ENCODE measurements at regions of chr10 and their contacts with region 1.

Region 1: DNA sequence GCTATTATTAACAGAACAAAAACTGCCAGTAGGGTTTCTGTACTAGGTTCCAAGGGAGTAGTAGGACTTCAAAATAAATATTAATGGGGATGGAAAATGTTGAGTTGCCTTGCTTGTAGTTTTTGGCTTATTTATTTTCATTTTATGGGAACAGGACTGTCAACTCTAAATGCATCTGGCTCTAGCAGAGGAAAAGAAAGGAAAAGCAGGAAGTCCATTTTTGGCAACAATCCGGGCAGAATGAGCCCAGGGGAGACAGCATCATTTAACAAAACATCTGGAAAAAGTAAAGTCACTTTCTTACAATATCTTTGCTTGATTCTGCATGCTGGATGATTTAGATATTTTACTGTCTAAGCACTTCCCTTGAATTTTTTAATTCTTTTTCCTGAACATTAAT is 69.4 kb downstream of the NOC3L start:
- DNase-seq: no peak
- H3K4me3 ChIP-seq: no peak overlapping the region
- H3K27ac ChIP-seq: no peak overlapping the region
- H3K4me1 ChIP-seq: no peaks in the 10 kb centered on the region
- H3K27me3 ChIP-seq: no peaks in the 10 kb centered on the region
- CTCF ChIP-seq: no peak

Region 2: DNA sequence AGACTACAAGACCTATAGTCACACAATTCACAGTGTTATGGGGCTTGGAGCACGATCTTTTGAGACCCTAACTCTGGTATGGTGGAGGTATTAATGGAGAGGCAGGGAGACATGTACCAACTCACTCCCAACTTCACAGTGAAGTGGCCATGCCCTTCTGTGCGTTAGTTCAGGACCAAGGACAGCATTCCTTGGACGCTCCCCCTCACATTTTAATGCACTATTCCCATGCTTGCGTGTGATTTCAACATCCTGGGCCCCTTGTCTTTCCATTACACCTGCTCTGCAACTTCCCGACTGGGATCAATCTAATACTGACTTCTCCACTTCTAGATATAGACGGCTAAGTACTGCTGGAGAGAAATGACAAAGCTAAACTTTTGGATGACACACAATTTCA is 226.9 kb before region 1 on chr10:
- CTCF ChIA-PET with region 1: no interaction called
- POLR2A ChIA-PET with region 1: interaction called, 10 read pairs
- intact Hi-C with region 1: no loop called
- DNase-seq: no peak
- H3K4me3 ChIP-seq: no peak overlapping the region
- H3K27ac ChIP-seq: no peak overlapping the region
- H3K4me1 ChIP-seq: no peaks in the 10 kb centered on the region
- H3K27me3 ChIP-seq: no peaks in the 10 kb centered on the region
- CTCF ChIP-seq: no peak

Region 3: GRCh38 chr10:94344522-94345122 is 51.3 kb after region 1 on chr10:
- CTCF ChIA-PET with region 1: no interaction called
- POLR2A ChIA-PET with region 1: no interaction called
- intact Hi-C with region 1: no loop called
- DNase-seq: no peak
- H3K4me3 ChIP-seq: no peak overlapping the region
- H3K27ac ChIP-seq: no peak overlapping the region
- H3K4me1 ChIP-seq: no peaks in the 10 kb centered on the region
- H3K27me3 ChIP-seq: no peaks in the 10 kb centered on the region
- CTCF ChIP-seq: no peak

Measured in PC-9 (cell line).